ENCODE measurements at regions of chr13 and their contacts with region 1.

Region 1: GRCh38 chr13:95834134-95834765 is 157.3 kb downstream of the DNAJC3 start:
- DNase-seq: peak; percentile 66
- ATAC-seq: peak; percentile 65

Region 2: GRCh38 chr13:95185851-95186250 is 648.4 kb before region 1 on chr13:
- intact Hi-C with region 1: loop called (anchors 5 kb)
- DNase-seq: no peak
- ATAC-seq: no peak

Region 3: DNA sequence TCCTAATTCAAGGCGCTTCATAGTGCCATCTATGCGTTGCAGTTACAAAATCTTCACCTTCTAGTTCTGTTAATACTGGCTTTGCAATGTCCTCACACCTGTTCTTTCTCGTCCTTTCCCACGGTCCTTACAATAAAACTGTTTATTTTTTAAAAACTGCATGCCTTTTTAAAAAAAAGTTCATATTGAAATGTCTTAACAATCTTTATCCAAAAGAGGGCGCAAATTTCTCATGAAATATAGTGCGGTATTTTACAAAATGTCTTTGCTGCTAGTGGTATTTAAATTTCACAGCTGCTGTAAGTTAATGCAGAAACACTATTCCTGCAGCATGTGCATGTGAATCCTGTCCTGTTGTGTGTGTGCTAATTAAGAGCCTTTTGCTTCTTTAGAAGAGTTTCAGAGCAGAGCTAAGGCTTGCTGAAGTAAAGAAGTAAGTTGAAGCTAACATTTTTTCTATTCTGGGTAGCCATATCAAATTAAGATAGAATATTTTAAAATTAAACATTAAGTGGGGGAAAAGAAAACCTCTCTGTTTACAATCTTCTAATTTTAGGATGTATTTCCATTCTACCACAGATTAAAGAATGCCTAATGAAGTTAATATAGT is 297.5 kb before region 1 on chr13:
- intact Hi-C with region 1: loop called (anchors 2 kb)
- DNase-seq: no peak
- ATAC-seq: no peak

Region 4: GRCh38 chr13:95624020-95624419 is 210.2 kb before region 1 on chr13:
- intact Hi-C with region 1: loop called (anchors 2 kb)
- DNase-seq: no peak
- ATAC-seq: peak; percentile 60